Naive thymus-derived CD4-positive, alpha-beta T cell (primary cell): ENCODE measurements at regions of chr22 and their contacts with region 1.

Region 1: DNA sequence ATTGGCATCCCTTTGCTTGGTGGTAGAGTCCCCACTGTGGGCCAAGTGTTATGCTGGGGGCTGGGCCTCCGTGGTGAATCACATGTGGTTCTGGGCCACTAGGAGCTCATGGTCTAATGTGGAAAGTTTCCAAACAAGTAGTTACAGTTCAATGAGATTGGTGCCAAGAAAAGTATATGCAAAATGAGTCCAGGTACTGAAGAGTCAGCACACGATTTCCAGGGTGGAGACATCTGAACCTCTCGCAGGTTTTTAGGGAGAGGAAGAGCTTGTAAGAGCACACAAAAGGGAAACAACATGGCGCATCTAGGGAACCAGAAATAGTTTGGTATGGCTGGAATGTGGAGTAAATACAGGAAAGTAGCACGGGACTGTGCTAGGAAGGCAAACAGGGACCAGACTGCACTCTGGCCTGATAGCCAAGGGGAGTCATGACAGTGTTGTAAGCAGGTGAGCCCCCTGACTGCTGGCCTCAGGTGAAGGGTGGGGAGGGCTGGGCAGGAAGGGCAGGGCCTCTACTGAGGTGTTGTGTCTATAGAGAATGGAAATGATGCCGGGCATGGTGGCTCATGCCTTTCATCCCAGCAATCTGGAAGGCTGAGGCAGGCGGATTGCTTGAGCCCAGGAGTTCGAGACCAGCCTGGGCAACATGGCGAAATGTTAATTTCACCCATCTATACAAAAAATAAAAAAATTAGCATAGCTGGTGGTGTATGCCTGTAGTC is 12.6 kb downstream of the POLR2F start:
- DNase-seq: no peak
- ATAC-seq: no peak
- H3K4me3 ChIP-seq: no peak overlapping the region
- H3K4me3 Mint-ChIP-seq: no peak overlapping the region
- H3K27ac ChIP-seq: no peak overlapping the region
- H3K27ac Mint-ChIP-seq: no peak overlapping the region
- H3K4me1 ChIP-seq: no peaks in the 10 kb centered on the region
- H3K4me1 Mint-ChIP-seq: peaks cover 2 to 14% (median 5%) of the 10 kb centered on the region in 7 donors
- H3K27me3 ChIP-seq: no peaks in the 10 kb centered on the region
- H3K27me3 Mint-ChIP-seq: no peaks in the 10 kb centered on the region

Region 2: GRCh38 chr22:37817705-37818408 is 148.2 kb before region 1 on chr22:
- CTCF ChIA-PET with region 1: interaction called, 22 read pairs
- POLR2A ChIA-PET with region 1: no interaction called
- intact Hi-C with region 1: loop called in 1 of 2 experiments (anchors 1 kb)
- DNase-seq: peak; percentile 44 to 92 (median 72)
- ATAC-seq: peak; percentile 92
- H3K4me3 ChIP-seq: peak overlapping the region; percentile 61
- H3K4me3 Mint-ChIP-seq: peak overlapping the region in 9 of 10 donors; percentile 34 to 74 (median 52)
- H3K27ac ChIP-seq: no peak overlapping the region
- H3K27ac Mint-ChIP-seq: no peak overlapping the region
- H3K4me1 ChIP-seq: peaks cover 10% of the 10 kb centered on the region in 2 donors
- H3K4me1 Mint-ChIP-seq: peaks cover 0 to 16% (median 11%) of the 10 kb centered on the region in 7 donors
- H3K27me3 ChIP-seq: no peaks in the 10 kb centered on the region
- H3K27me3 Mint-ChIP-seq: peaks cover 9 to 33% (median 20%) of the 10 kb centered on the region in 5 donors

Region 3: GRCh38 chr22:37887610-37888378 is 78.3 kb before region 1 on chr22:
- CTCF ChIA-PET with region 1: interaction called, 5 read pairs
- POLR2A ChIA-PET with region 1: no interaction called
- intact Hi-C with region 1: loop called in 1 of 2 experiments (anchors 1 kb)
- DNase-seq: no peak
- ATAC-seq: peak; percentile 29
- H3K4me3 ChIP-seq: no peak overlapping the region
- H3K4me3 Mint-ChIP-seq: no peak overlapping the region
- H3K27ac ChIP-seq: no peak overlapping the region
- H3K27ac Mint-ChIP-seq: peak overlapping the region; percentile 39 to 86 (median 51)
- H3K4me1 ChIP-seq: no peaks in the 10 kb centered on the region
- H3K4me1 Mint-ChIP-seq: peaks cover 9 to 22% (median 16%) of the 10 kb centered on the region in 7 donors
- H3K27me3 ChIP-seq: no peaks in the 10 kb centered on the region
- H3K27me3 Mint-ChIP-seq: no peaks in the 10 kb centered on the region

Region 4: DNA sequence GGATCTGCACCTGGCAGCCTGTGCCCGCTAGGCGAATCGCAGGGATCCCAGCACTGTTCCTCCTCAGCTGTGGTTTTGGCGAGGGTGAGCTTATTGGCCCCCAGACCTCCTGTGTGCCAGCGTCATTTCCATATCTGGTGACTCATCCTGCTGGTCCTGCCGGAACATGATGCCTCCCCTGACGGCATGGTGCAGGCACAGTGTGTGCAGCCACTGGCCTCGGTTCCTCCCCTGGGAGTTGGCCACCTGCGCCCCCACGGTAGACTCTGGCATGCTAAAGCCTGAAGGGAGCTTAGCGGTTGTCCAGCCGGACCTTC is 33.8 kb after region 1 on chr22:
- CTCF ChIA-PET with region 1: no interaction called
- POLR2A ChIA-PET with region 1: no interaction called
- intact Hi-C with region 1: no loop called
- DNase-seq: no peak
- ATAC-seq: peak; percentile 57
- H3K4me3 ChIP-seq: no peak overlapping the region
- H3K4me3 Mint-ChIP-seq: no peak overlapping the region
- H3K27ac ChIP-seq: no peak overlapping the region
- H3K27ac Mint-ChIP-seq: no peak overlapping the region
- H3K4me1 ChIP-seq: peaks cover 0 to 36% of the 10 kb centered on the region in 2 donors
- H3K4me1 Mint-ChIP-seq: peaks cover 0 to 25% (median 0%) of the 10 kb centered on the region in 7 donors
- H3K27me3 ChIP-seq: no peaks in the 10 kb centered on the region
- H3K27me3 Mint-ChIP-seq: no peaks in the 10 kb centered on the region